Cardiac septum (tissue), 1 donor: ENCODE measurements at regions of chr6 and their contacts with region 1.

Region 1: DNA sequence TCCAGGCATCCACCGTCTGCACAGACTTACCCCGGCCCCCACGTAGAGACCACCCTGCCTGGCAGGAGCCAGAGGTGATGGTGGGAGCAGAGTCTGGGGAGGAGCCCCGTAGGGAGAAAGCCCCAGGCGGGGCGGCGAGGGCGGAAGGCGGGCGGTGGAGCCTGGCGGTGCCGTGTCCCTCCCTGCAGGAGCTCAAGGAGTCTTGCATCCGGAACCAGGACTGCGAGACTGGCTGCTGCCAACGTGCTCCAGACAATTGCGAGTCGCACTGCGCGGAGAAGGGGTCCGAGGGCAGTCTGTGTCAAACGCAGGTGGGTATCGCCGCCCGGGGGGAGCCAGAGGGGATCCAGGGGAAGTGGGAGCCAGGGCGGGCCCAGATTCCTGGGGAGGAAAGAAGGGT is 6.0 kb downstream of the CLPSL1 start:
- DNase-seq: no peak

Region 2: DNA sequence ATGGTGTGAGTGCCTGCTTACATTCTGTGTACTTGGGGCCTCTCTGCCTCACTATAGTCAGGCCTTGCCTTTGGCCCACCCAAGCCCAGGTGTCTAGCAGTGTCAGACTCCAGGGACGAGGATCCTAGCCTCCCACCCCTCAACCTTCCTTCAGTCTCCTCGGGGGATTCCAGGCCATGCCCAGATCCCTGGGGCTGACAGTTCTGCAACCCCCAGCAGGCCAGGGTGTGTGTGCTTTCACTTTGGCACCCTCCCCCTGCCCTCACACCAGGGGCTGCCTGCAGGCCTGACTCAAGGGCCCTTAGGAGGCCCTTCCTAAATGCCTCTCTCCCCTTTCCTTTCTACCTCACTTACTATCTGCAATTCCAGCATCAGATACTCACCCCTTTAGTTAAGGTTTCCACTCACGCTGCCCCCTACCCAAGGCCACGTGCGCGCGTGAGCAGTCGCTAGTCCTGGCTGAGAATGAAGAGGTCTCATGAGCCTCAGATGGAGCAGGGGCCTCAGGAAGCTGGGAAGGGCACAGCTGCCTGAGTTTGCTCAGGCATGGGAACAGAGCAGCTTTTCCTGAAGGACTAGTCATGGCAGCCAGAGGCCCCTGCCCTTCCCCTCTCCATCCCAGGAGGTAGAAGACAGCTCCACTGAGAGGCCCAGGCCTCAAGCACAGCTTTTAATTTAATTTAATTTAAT is 11.2 kb after region 1 on chr6:
- intact Hi-C with region 1: loop called (anchors 1 kb)
- DNase-seq: no peak